ENCODE measurements at regions of chr4 and their contacts with region 1.

Region 1: DNA sequence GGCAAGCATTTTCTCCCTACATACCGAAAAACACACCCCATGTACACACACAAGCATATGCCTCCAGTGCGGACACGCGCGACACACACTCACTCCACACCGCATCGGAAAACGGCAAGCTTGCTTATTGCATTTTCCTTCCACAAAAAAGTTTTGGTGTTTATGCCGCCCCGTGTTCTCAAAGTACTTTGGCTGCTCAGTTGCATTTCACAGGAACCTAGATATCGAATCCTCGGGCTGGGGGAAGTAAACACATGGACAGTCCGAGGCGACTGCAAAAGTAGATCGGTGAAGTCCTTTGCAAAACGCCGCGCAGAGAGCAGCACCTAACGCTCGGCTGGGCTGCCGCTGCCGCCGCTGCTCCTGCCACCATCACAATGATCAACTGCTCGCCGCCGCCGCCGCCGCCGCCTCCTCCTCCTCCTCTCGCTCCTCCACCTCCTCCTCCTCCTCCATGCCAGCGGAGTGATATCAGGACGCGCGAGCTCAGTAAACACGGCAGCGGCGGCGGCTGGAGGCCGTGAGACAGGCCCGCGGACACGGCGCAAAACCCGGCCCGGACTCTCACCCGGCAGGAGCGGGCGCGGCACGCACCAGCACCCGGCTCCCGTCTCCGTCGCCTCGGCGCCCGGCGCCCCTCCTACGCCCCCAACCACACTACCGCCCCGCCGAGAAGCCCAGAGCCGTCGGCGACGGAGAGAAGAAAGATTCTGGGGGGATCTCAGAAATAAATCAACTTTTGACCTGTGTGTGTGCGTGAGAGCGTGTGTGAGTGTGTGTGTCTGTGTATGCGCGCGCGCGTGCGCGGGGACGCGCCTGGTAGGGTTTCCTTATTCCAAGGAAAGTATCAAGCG is at the start of gene MAML3:
- DNase-seq: peak; percentile 96
- ATAC-seq: peak; percentile 81
- total RNA-seq, gene MAML3: 11.0 TPM

Region 2: DNA sequence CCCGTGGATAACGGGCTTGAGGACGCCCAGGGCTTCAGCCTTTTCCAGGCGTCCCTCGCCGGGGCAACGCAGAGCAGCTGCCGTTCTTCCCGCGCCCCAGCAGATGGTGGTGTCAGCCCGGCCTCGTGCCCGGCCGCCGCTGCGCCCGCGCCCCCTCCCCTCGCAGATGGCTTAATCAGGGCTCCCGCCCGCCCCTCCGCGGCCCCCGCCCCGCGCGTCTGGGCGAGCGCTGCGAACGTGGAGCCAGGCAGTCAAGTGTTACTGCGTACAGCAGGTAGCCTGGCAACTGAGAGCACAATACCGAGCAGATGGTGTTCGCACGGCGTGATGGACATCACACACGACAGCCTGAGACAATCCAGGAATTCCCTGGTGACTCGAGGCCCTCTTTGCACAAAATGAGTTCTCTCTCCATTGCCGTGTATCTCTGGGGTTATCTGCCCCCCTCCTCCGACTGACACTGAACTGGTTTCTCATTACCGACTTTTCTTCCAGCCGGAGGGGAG is 419.0 kb before region 1 on chr4:
- intact Hi-C with region 1: loop called (anchors 10 kb)
- DNase-seq: peak; percentile 93
- ATAC-seq: peak; percentile 95

Region 3: GRCh38 chr4:140176735-140177134 is 22.8 kb after region 1 on chr4:
- intact Hi-C with region 1: loop called (anchors 1 kb)
- DNase-seq: no peak
- ATAC-seq: no peak

Region 4: GRCh38 chr4:140243278-140243753 is 89.4 kb after region 1 on chr4:
- intact Hi-C with region 1: loop called (anchors 5 kb)
- DNase-seq: no peak
- ATAC-seq: peak; percentile 41

Region 5: GRCh38 chr4:140252742-140253555 is 99.0 kb after region 1 on chr4:
- intact Hi-C with region 1: loop called (anchors 5 kb)
- DNase-seq: peak; percentile 88
- ATAC-seq: peak; percentile 90